ENCODE measurements at regions of chr2 and their contacts with region 1.

Region 1: DNA sequence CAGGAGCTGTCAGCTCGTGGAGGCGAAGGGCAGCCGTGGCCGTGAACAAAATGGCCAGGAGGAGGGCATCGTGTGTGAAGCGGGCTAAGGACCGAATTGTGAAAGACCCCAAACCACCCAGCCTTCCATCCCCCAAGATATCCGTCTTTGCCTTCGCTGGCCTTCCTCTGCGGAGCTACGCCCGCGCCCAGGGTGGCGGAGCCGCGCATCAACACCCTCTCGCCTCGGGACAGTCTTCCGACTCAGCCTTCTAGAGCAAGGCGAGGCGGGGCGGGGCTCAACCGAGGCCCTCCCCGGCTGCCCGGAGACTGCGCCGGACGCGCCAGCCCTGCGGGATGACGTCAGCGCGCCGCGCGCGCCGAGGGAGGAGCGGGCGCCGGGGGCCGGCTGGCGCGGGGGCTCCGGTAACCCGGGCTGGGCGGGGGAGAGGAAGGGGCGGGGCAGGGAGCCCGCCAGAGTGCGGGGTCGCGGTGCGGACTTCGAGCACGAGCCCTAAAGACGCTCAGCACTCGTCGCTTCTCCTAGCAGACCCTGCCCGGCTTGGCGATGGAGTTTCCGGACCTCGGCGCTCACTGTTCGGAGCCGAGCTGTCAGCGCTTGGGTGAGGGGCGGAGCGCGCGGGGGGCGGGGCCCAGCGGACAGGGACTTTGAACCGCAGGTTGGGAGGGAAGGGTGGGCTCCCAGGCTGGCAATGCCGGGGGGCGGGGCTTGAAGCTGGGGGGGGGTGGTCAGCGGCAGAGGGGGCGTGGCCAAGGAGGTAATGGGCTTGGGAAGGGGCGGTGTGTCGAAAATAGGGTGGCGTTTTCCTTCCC is at the start of gene ZFAND2B:
- DNase-seq: peak; percentile 95
- H3K4me3 Mint-ChIP-seq: peak within 1 kb of the TSS; percentile 94
- H3K27ac Mint-ChIP-seq: peak within 1 kb of the TSS; percentile 99
- H3K4me1 Mint-ChIP-seq: peaks cover 32% of the 10 kb centered on the region
- H3K27me3 Mint-ChIP-seq: no peaks in the 10 kb centered on the region
- total RNA-seq, gene ZFAND2B: 31.9 to 34.4 TPM

Region 2: DNA sequence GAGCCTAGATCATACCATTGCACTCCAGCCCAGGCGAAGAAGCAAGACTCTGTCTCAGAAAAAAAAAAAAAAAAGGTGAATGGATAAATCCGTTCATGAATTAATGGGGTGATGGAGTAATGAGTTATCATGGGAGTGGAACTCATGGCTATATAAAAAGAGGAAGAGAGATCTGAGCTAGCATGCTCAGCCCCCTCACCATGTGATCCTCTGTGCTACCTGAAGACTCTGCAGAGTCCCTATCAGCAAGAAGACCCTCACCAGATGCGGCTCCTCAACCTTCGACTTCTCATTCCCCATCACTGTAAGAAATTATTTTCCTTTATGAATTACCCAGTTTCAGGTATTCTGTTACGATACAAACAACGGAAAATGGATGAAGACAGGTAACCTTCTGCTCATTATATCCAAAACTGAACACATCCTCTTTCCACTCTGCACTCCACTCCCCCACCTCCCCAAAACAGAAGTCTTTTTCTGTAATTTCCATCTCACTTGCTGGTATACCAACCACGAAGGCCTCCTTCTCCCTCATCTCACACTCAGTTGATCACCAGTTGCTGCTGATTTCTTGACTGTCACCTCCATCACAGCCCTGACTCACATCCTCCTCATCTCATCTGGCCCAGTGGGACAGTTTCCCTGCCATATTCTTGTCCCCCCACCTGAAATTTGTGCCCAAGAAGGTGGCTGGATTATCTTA is 19.7 kb before region 1 on chr2:
- CTCF ChIA-PET with region 1: interaction called, 4 read pairs
- POLR2A ChIA-PET with region 1: interaction called, 10 read pairs
- intact Hi-C with region 1: no loop called
- DNase-seq: peak; percentile 56
- H3K4me3 Mint-ChIP-seq: peak overlapping the region; percentile 4
- H3K27ac Mint-ChIP-seq: peak overlapping the region; percentile 88
- H3K4me1 Mint-ChIP-seq: peaks cover 14% of the 10 kb centered on the region
- H3K27me3 Mint-ChIP-seq: no peaks in the 10 kb centered on the region

Region 3: DNA sequence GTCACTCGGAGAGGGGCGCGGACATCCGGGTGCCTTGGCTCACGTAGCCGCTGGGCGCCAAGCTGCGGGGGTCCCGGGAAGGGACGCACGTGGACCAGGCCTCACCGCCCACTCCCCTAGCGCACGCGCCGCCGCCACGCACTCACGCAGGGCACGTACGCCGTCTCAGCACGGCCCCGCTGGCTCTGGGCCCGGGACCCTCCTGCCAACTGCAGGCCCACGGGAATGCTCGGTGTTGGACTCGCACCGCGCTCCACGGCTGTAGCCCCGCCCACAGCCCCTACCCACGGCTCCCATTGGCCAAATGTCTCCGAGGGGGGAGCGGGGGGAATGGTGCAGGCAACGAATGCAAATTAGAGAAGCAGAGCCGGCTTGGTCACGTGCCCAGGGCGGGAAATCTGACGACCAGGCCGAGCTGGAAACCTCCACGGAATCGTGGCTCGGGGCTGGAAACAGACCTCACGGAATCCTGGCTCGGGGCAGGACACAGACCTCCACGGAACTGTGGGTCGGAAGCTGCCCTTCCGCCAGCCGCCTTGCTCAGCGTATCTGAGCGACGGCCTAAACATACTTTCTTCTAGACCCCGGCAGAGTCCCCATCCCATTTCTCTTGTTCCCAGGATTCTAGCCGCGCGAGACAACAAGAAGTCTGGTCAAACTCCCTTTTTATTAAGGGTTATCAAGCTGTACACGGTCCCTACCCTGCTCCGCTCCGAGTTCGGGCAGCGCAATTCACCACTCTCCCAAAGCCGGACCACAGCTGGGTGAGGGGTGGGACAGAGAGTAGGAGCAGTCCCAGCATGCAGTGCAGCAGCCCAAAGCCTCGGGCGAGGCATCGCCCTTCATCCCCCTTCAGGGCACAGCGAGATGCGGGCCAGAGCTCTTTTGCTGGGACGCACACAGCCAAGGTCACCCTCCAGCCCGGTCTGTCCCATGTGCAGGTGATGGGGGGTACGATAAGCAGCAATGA is 12.4 kb after region 1 on chr2 and contains the start of gene ABCB6:
- CTCF ChIA-PET with region 1: interaction called, 5 read pairs
- POLR2A ChIA-PET with region 1: interaction called, 13 read pairs
- intact Hi-C with region 1: loop called (anchors 1 kb)
- DNase-seq: peak; percentile 92
- H3K4me3 Mint-ChIP-seq: peak within 1 kb of the TSS; percentile 80
- H3K27ac Mint-ChIP-seq: peak within 1 kb of the TSS; percentile 69
- H3K4me1 Mint-ChIP-seq: peaks cover 19% of the 10 kb centered on the region
- H3K27me3 Mint-ChIP-seq: no peaks in the 10 kb centered on the region
- total RNA-seq, gene ABCB6: 11.5 to 11.7 TPM

Region 4: DNA sequence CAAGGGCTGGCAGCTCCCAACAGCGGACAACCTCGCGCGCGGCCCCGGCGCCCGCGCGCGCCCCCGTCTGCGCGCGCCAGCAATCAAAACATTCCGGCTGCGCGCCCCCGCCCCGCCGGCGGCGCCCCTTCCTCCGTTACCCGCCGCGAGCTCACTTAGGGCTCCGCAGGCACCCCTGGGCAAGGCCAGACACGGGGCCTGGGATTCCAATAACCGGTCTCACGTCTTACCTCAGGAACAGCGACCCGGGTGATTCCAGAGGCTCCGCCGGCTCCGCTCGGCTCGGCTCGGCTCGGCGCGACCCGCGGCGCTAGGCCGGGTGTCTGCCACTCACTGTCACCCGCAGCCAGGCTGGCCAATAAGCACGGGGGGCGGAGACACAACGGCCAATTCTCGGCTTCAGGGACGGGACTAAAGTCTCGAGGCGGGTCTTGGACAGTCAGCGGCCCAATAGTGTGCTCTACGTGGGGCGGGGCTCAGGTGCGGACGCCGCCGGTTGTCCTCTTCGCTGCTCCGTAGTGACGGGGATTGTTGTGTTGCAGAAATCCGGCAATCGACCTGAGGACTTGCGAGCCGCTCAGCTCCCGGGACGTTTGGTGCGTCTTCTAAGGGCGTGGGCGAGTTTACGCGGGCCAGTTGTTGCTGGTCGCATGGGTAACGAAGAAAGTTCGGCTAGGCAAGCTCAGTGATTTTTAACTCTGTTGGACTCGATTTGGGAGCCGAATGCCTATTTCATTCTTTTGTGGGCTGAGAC is 22.8 kb after region 1 on chr2 and contains the starts of genes ANKZF1 and ATG9A:
- CTCF ChIA-PET with region 1: interaction called, 6 read pairs
- POLR2A ChIA-PET with region 1: interaction called, 16 read pairs
- intact Hi-C with region 1: loop called (anchors 1 kb)
- DNase-seq: peak; percentile 99
- H3K4me3 Mint-ChIP-seq: peak within 1 kb of the TSS; percentile 95
- H3K27ac Mint-ChIP-seq: peak within 1 kb of the TSS; percentile 99
- H3K4me1 Mint-ChIP-seq: peaks cover 50% of the 10 kb centered on the region
- H3K27me3 Mint-ChIP-seq: no peaks in the 10 kb centered on the region
- total RNA-seq, gene ANKZF1: 97.0 to 97.5 TPM
- total RNA-seq, gene ATG9A: 34.7 to 39.5 TPM

Region 5: DNA sequence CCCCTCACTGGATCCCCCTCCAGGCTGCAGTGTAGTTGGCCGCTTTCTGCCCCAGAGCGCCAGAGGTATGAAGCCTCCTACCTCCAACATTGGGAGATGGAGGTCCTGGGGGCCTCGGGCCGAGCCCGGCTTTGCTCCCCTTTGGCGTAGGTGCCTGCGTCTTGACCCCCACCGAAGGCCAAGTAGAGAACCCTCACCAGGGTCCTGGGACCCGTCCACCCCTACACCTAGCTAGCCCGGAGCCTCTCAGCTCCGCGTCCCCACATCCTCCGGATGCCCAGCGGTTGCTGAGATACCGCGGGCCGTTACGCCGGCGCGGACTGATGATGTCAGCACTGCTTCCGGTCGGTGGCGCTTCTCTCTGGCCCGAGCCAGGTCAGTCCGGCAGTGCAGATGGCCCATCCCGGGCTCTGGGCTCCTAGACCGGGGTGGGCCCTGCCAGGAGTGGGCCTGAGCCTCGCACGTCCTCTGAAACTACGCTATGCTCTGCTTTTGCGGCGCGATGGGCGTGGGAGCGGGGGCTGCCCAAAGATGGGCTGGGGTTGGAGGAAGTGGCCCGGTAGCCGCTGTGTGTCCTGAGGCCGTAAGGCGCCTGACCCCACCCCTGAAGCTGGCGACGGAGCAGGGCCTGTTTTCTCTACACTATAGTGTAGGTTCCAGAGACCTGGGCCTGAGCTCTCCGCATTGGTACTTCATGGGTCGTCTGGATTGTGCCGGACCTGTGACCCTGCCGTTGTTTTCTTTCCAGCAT is 38.7 kb after region 1 on chr2 and contains the starts of genes GLB1L and STK16:
- CTCF ChIA-PET with region 1: interaction called, 4 read pairs
- POLR2A ChIA-PET with region 1: interaction called, 11 read pairs
- intact Hi-C with region 1: no loop called
- DNase-seq: peak; percentile 95
- H3K4me3 Mint-ChIP-seq: peak within 1 kb of the TSS; percentile 98
- H3K27ac Mint-ChIP-seq: peak within 1 kb of the TSS; percentile 98
- H3K4me1 Mint-ChIP-seq: peaks cover 61% of the 10 kb centered on the region
- H3K27me3 Mint-ChIP-seq: no peaks in the 10 kb centered on the region
- total RNA-seq, gene GLB1L: 4.8 to 4.9 TPM
- total RNA-seq, gene STK16: 37.1 to 37.8 TPM

Region 6: DNA sequence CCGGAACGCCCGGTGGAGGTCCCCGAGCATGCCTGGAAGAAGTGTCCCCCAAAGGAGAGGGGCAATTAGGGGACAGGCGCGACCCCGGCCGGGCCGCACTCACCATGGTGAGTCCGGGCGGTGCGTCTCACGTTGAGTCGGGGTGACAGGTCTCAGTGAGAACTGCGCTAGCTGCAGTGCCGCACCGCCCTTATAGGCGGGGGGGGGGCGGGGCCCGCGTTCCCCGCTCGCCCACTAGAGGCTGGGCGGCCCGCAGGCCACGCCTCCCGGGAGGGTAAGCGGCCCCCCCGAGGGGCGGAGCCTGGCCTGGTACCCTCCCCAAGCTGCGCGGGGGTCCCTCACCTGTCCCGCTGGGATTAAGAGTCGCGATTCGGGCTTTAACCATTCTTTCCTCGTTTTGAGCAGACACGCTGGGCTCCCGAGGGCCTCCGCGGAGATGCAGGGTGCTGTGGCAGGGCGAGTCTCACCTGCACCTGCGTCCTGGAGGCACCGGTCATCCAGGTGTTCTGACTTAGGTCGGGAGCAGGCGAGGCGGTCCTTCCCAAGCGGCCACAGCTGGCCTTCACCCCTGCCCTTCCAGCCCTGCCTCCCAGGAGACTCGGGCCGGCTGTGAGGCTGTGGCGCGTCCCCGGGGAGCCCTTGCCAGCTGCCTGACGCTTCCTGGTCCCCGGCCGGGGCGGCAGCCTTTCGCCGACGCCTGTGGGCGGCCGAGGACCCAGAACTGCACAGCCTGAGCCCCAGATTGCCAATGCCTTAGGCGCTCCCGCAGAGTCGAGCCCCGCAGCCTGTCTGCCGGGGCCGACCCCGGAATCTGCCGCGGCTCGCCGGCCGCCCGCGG is 47.3 kb after region 1 on chr2 and contains the start of gene TUBA4A:
- CTCF ChIA-PET with region 1: interaction called, 3 read pairs
- POLR2A ChIA-PET with region 1: interaction called, 5 read pairs
- intact Hi-C with region 1: loop called (anchors 1 kb)
- DNase-seq: peak; percentile 92
- H3K4me3 Mint-ChIP-seq: peak within 1 kb of the TSS; percentile 86
- H3K27ac Mint-ChIP-seq: peak within 1 kb of the TSS; percentile 97
- H3K4me1 Mint-ChIP-seq: peaks cover 49% of the 10 kb centered on the region
- H3K27me3 Mint-ChIP-seq: no peaks in the 10 kb centered on the region
- total RNA-seq, gene TUBA4A: 219 to 229 TPM

Region 7: GRCh38 chr2:219278655-219279516 is 72.2 kb after region 1 on chr2 and contains the start of gene DNAJB2:
- CTCF ChIA-PET with region 1: no interaction called
- POLR2A ChIA-PET with region 1: interaction called, 3 read pairs
- intact Hi-C with region 1: loop called (anchors 1 kb)
- DNase-seq: peak; percentile 100
- H3K4me3 Mint-ChIP-seq: peak within 1 kb of the TSS; percentile 80
- H3K27ac Mint-ChIP-seq: peak within 1 kb of the TSS; percentile 95
- H3K4me1 Mint-ChIP-seq: peaks cover 43% of the 10 kb centered on the region
- H3K27me3 Mint-ChIP-seq: no peaks in the 10 kb centered on the region
- total RNA-seq, gene DNAJB2: 37.3 to 39.1 TPM

Measured in activated CD4-positive, alpha-beta memory T cell treated with anti-CD3 and anti-CD28 coated beads for 36 hours (primary cell).